Activated B cell treated with CpG ODN at 0.5 μM for 24 hours (primary cell): ENCODE measurements at regions of chr11 and their contacts with region 1.

Region 1: DNA sequence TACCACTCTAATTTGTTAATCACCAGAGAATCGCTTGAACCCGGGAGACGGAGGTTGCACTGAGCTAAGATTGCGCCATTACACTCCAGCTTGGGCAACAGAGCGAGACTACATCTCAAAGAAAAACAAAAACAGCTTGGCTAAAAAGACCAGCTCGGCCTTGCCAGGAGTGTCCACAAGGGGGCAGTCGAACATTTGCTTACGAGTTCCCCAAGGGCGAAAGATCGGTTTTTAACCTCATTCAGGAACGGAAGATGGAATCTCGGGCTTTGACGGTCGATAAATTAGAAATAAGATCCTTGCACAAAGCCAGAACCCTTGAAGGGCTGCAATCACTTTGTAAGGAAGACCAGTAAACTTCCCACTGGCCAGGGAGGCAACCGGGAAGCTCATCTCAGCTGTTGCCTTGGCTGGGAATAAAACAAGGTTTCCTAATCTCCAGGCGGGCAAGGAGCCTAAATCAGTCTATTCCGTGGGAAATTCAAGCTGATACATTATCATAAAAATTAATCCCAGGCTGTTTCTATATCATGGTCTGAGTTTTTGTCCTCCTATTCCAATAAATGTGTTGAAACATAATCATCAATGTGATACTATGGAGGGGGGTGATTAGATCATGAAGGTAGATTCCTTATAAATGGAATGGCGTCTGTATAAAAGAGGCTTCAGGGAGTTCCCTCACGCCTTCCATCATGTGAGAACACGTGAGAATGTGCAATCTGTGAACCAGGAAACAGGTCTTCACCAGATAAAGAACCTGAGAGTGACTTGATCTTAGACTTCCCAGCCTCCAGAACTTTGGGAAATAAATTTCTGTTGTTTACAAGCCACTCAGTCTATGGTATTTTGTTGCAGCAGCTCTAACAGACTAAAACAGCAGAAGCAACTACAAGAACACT is 14.9 kb upstream of the SLC29A2 start:
- DNase-seq: peak; percentile 68
- ATAC-seq: peak; percentile 84
- H3K4me3 Mint-ChIP-seq: peak overlapping the region; percentile 17
- H3K27ac Mint-ChIP-seq: no peak overlapping the region
- H3K4me1 Mint-ChIP-seq: peaks cover 9% of the 10 kb centered on the region
- H3K27me3 Mint-ChIP-seq: no peaks in the 10 kb centered on the region
- CTCF ChIP-seq: no peak

Region 2: DNA sequence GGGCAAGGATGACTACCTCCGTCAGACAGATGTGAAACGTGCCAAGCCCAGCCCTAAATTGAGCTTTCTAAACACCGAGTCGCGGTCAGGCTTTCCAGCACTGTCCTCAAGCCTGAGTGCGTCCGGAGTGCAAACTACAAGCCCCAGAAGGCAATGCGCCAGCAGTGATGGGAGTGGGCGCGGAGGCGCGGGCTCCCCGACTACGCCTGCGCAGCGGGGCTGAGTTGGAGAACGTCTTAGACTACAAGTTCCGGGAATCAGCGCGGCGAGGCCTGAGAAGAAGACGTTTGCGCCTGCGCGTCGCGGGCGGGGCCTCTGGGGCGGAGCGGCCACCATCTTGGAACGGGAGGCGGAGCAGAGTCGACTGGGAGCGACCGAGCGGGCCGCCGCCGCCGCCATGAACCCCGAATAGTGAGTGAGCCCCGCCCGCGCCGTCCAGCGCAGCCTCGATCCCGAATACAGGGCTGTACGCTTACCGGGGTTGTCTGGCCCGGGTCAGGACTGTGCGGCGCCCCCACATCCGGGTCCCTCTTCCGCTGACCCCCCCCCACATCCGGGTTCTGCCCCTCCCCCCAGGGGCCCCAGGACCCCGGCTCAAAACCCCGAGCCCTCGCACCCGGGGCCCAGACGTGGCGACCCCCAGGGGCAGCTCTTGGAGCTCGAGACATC is 118.0 kb before region 1 on chr11 and contains the start of gene RAB1B:
- CTCF ChIA-PET with region 1: no interaction called
- POLR2A ChIA-PET with region 1: no interaction called
- intact Hi-C with region 1: no loop called
- DNase-seq: peak; percentile 98
- ATAC-seq: peak; percentile 76
- H3K4me3 Mint-ChIP-seq: peak within 1 kb of the TSS; percentile 90
- H3K27ac Mint-ChIP-seq: peak within 1 kb of the TSS; percentile 97
- H3K4me1 Mint-ChIP-seq: peaks cover 32% of the 10 kb centered on the region
- H3K27me3 Mint-ChIP-seq: no peaks in the 10 kb centered on the region
- CTCF ChIP-seq: no peak
- total RNA-seq, gene RAB1B: 115 and 118 TPM in 2 replicates

Region 3: GRCh38 chr11:66328307-66329144 is 57.9 kb before region 1 on chr11:
- CTCF ChIA-PET with region 1: no interaction called
- POLR2A ChIA-PET with region 1: interaction called, 4 read pairs
- intact Hi-C with region 1: loop called (anchors 1 kb)
- DNase-seq: peak; percentile 79
- ATAC-seq: peak; percentile 99
- H3K4me3 Mint-ChIP-seq: peak overlapping the region; percentile 46
- H3K27ac Mint-ChIP-seq: no peak overlapping the region
- H3K4me1 Mint-ChIP-seq: peaks cover 22% of the 10 kb centered on the region
- H3K27me3 Mint-ChIP-seq: no peaks in the 10 kb centered on the region
- CTCF ChIP-seq: peak; percentile 63

Region 4: GRCh38 chr11:66344550-66345315 is 41.7 kb before region 1 on chr11 and contains the start of gene BRMS1:
- CTCF ChIA-PET with region 1: interaction called, 14 read pairs
- POLR2A ChIA-PET with region 1: no interaction called
- intact Hi-C with region 1: loop called (anchors 5 kb)
- DNase-seq: peak; percentile 93
- ATAC-seq: peak; percentile 82
- H3K4me3 Mint-ChIP-seq: peak within 1 kb of the TSS; percentile 96
- H3K27ac Mint-ChIP-seq: peak within 1 kb of the TSS; percentile 93
- H3K4me1 Mint-ChIP-seq: peaks cover 45% of the 10 kb centered on the region
- H3K27me3 Mint-ChIP-seq: peaks cover 2% of the 10 kb centered on the region
- CTCF ChIP-seq: no peak
- total RNA-seq, gene BRMS1: 56.9 and 59.2 TPM in 2 replicates

Region 5: GRCh38 chr11:66363805-66364535 is 22.4 kb before region 1 on chr11:
- CTCF ChIA-PET with region 1: interaction called, 10 read pairs
- POLR2A ChIA-PET with region 1: interaction called, 4 read pairs
- intact Hi-C with region 1: no loop called
- DNase-seq: peak; percentile 45
- ATAC-seq: peak; percentile 64
- H3K4me3 Mint-ChIP-seq: no peak overlapping the region
- H3K27ac Mint-ChIP-seq: no peak overlapping the region
- H3K4me1 Mint-ChIP-seq: no peaks in the 10 kb centered on the region
- H3K27me3 Mint-ChIP-seq: no peaks in the 10 kb centered on the region
- CTCF ChIP-seq: no peak

Region 6: GRCh38 chr11:66371627-66372415 is 14.6 kb before region 1 on chr11 and contains the start of gene SLC29A2:
- CTCF ChIA-PET with region 1: interaction called, 31 read pairs
- POLR2A ChIA-PET with region 1: interaction called, 17 read pairs
- intact Hi-C with region 1: loop called (anchors 1 kb)
- DNase-seq: peak; percentile 78
- ATAC-seq: peak; percentile 87
- H3K4me3 Mint-ChIP-seq: peak within 1 kb of the TSS; percentile 90
- H3K27ac Mint-ChIP-seq: peak within 1 kb of the TSS; percentile 94
- H3K4me1 Mint-ChIP-seq: peaks cover 15% of the 10 kb centered on the region
- H3K27me3 Mint-ChIP-seq: no peaks in the 10 kb centered on the region
- CTCF ChIP-seq: no peak
- total RNA-seq, gene SLC29A2: 13.5 and 17.1 TPM in 2 replicates

Region 7: DNA sequence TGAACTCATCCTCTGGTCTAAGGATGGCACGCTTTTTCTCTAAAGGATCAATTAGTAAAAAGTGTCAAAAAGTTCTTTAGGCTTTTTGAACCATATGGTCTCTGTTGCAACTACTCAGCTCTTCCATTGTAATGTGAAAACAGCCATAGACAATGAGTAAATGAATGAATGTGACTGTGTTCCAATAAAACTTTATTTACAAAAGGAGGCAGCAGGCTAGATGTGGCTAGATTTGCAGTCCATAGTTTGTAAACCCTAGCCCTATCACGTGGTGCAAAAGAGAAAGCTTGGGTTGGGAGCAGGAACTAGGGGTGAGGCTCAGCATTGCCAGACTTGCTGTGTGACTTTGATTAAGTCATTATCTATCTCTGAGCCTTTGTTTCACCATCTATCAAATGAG is 29.0 kb after region 1 on chr11:
- CTCF ChIA-PET with region 1: no interaction called
- POLR2A ChIA-PET with region 1: no interaction called
- intact Hi-C with region 1: no loop called
- DNase-seq: no peak
- ATAC-seq: no peak
- H3K4me3 Mint-ChIP-seq: no peak overlapping the region
- H3K27ac Mint-ChIP-seq: no peak overlapping the region
- H3K4me1 Mint-ChIP-seq: peaks cover 9% of the 10 kb centered on the region
- H3K27me3 Mint-ChIP-seq: peaks cover 77% of the 10 kb centered on the region
- CTCF ChIP-seq: no peak

Region 8: GRCh38 chr11:66429983-66430602 is 43.7 kb after region 1 on chr11:
- CTCF ChIA-PET with region 1: interaction called, 4 read pairs
- POLR2A ChIA-PET with region 1: no interaction called
- intact Hi-C with region 1: loop called (anchors 5 kb)
- DNase-seq: peak; percentile 44
- ATAC-seq: peak; percentile 70
- H3K4me3 Mint-ChIP-seq: no peak overlapping the region
- H3K27ac Mint-ChIP-seq: no peak overlapping the region
- H3K4me1 Mint-ChIP-seq: no peaks in the 10 kb centered on the region
- H3K27me3 Mint-ChIP-seq: no peaks in the 10 kb centered on the region
- CTCF ChIP-seq: no peak